A549 (cell line): ENCODE measurements at regions of chr14 and their contacts with region 1.

Region 1: GRCh38 chr14:67666750-67667449 is 7.5 kb downstream of the VTI1B start:
- DNase-seq: peak; percentile 43 to 68
- ATAC-seq: peak; percentile 81 to 96
- H3K4me3 ChIP-seq: no peak overlapping the region
- H3K27ac ChIP-seq: no peak overlapping the region
- H3K4me1 ChIP-seq: no peaks in the 10 kb centered on the region
- CTCF ChIP-seq: peak; percentile 82
- EP300 ChIP-seq: no peak
- POLR2A ChIP-seq: no peak
- RAD21 ChIP-seq: peak; percentile 80 to 83

Region 2: GRCh38 chr14:67502881-67503699 is 163.8 kb before region 1 on chr14:
- CTCF ChIA-PET with region 1: no interaction called
- POLR2A ChIA-PET with region 1: no interaction called
- DNase-seq: no peak
- ATAC-seq: no peak
- H3K4me3 ChIP-seq: no peak overlapping the region
- H3K27ac ChIP-seq: no peak overlapping the region
- H3K4me1 ChIP-seq: no peaks in the 10 kb centered on the region
- CTCF ChIP-seq: no peak
- EP300 ChIP-seq: no peak
- POLR2A ChIP-seq: no peak
- RAD21 ChIP-seq: no peak

Region 3: GRCh38 chr14:67599698-67600561 is 67.0 kb before region 1 on chr14 and contains the start of gene PIGH:
- CTCF ChIA-PET with region 1: interaction called, 11 read pairs
- POLR2A ChIA-PET with region 1: interaction called, 6 read pairs
- DNase-seq: peak; percentile 87 to 91
- ATAC-seq: peak; percentile 98 to 99
- H3K4me3 ChIP-seq: peak within 1 kb of the TSS; percentile 86
- H3K27ac ChIP-seq: peak within 1 kb of the TSS; percentile 86 to 89
- H3K4me1 ChIP-seq: peaks cover 11% of the 10 kb centered on the region; the same call in 2 of the 3 replicates
- CTCF ChIP-seq: peak; percentile 56
- EP300 ChIP-seq: no peak
- POLR2A ChIP-seq: peak; percentile 71
- RAD21 ChIP-seq: no peak; a peak in 1 of 5 replicates
- polyA plus RNA-seq, gene PIGH: 37.2 and 46.2 TPM in 2 replicates

Region 4: DNA sequence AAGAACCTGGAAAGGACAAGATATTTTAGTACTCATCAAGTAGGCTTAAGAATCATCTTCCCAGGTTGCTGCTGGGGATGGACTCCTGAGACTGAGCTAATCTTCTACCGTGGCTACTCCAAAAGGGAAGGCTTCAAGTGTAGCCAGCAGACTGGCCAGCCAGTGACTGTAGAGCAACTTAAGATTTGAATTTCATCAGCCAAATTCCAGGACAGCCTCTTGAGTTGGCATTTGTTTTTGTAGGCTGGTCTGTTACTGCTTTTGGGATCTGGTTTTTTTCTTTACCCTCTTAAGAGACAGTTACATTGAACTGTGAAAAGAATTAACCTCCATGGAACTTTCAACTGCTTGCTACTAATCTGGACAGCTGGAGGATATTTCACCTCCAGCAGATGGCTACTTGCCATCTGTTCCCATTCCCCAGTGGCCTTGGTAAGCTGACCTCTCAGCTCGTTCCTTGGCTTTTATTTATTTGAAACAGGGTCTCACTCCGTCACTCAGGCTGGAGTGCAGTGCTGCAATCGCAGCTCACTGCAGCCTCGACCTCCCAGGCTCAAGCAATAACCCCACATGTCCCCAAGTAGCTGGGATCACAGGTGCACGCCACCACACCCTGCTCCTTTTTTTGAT is 13.1 kb before region 1 on chr14:
- CTCF ChIA-PET with region 1: interaction called, 14 read pairs
- POLR2A ChIA-PET with region 1: no interaction called
- DNase-seq: no peak
- ATAC-seq: no peak
- H3K4me3 ChIP-seq: no peak overlapping the region
- H3K27ac ChIP-seq: peak overlapping the region in 1 of 2 experiments; percentile 11; a peak in 1 of 6 replicates
- H3K4me1 ChIP-seq: peaks cover 5% of the 10 kb centered on the region; the same call in 1 of the 3 replicates
- CTCF ChIP-seq: no peak
- EP300 ChIP-seq: no peak
- POLR2A ChIP-seq: no peak
- RAD21 ChIP-seq: no peak

Region 5: GRCh38 chr14:67837011-67837624 is 170.2 kb after region 1 on chr14:
- CTCF ChIA-PET with region 1: no interaction called
- POLR2A ChIA-PET with region 1: no interaction called
- DNase-seq: peak; percentile 29 to 85
- ATAC-seq: peak in 1 of 2 experiments; percentile 74; a peak in 4 of 6 replicates
- H3K4me3 ChIP-seq: no peak overlapping the region
- H3K27ac ChIP-seq: no peak overlapping the region
- H3K4me1 ChIP-seq: no peaks in the 10 kb centered on the region
- CTCF ChIP-seq: peak; percentile 90
- EP300 ChIP-seq: no peak
- POLR2A ChIP-seq: no peak
- RAD21 ChIP-seq: peak; percentile 86 to 87